Esophagus muscularis mucosa (tissue), 4 donors: ENCODE measurements at regions of chr1 and their contacts with region 1.

Region 1: GRCh38 chr1:114402843-114403242 is 108.2 kb downstream of the TRIM33 start:
- DNase-seq: no peak
- H3K4me3 ChIP-seq: no peak overlapping the region
- H3K27ac ChIP-seq: no peak overlapping the region
- H3K4me1 ChIP-seq: no peaks in the 10 kb centered on the region
- H3K27me3 ChIP-seq: no peaks in the 10 kb centered on the region
- CTCF ChIP-seq: no peak
- EP300 ChIP-seq: no peak
- POLR2A ChIP-seq: no peak

Region 2: DNA sequence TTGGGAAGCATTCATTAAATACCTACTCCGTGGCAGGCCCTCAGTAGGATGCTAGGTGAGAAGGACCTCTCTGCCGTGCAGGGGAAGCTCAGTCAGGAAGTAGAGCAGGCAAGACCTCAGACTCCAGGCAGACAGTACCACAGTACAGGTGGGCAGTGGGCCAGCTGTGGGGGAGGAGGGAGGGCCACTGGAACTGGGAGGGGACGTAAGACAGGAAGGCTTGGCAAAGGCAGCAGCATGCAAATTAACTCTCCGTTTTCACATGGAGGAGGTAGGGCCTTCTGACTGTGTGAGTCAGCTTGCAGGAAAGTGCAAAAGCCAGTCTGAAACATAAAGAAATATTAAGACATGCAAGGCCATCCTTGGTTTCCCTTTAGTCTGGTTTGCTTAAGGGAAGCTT is 49.6 kb before region 1 on chr1:
- intact Hi-C with region 1: loop called (anchors 10 kb)
- DNase-seq: peak; percentile 93
- H3K4me3 ChIP-seq: no peak overlapping the region
- H3K27ac ChIP-seq: peak overlapping the region in 2 of 4 donors; percentile 30 to 45
- H3K4me1 ChIP-seq: peaks cover 12 to 22% (median 16%) of the 10 kb centered on the region in 4 donors
- H3K27me3 ChIP-seq: no peaks in the 10 kb centered on the region
- CTCF ChIP-seq: no peak
- EP300 ChIP-seq: no peak
- POLR2A ChIP-seq: no peak